ENCODE measurements at regions of chr1 and their contacts with region 1.

Region 1: DNA sequence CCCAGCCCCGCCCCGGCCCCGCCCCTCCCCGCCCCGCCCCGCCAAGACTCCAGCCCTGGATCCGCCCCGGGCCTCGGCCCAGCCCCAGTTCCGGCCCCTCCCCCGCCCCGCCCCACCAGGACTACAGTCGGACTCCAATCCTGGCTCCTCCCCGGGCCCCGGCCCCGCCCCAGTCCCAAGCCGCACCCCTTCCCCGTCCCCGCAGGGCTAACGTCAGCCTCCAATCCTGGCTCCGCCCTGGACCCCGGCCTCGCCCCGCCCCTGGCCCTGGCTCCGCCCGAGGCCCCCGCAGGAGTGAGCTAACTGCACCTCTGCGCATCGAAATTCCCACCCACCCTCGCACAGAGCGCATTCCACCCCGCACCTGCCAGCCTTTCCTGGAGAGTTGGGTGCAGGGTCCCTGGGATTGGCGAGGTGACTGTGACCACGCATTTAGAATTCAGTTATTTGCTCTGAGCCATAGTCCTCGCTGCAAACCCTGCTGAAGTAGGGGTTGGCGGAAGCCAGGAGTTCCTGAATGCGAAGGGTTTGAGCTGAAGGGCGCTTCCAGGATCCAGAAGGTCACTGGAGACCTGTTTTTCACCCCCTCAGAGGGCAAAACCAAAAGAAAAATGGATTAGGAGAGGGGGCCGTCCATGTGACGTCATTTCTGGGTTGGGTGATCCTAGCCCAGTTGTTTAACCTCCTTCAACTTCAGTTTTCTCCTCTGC is 588 bp upstream of the IGSF8 start:
- H3K4me3 ChIP-seq: peak overlapping the region; percentile 15
- H3K27ac ChIP-seq: no peak overlapping the region
- H3K4me1 ChIP-seq: peaks cover 4% of the 10 kb centered on the region
- CTCF ChIP-seq: no peak

Region 2: GRCh38 chr1:159829273-159829634 is 269.8 kb before region 1 on chr1:
- CTCF ChIA-PET with region 1: no interaction called
- POLR2A ChIA-PET with region 1: no interaction called
- H3K4me3 ChIP-seq: no peak overlapping the region
- H3K27ac ChIP-seq: no peak overlapping the region
- H3K4me1 ChIP-seq: no peaks in the 10 kb centered on the region
- CTCF ChIP-seq: peak; percentile 68

Region 3: DNA sequence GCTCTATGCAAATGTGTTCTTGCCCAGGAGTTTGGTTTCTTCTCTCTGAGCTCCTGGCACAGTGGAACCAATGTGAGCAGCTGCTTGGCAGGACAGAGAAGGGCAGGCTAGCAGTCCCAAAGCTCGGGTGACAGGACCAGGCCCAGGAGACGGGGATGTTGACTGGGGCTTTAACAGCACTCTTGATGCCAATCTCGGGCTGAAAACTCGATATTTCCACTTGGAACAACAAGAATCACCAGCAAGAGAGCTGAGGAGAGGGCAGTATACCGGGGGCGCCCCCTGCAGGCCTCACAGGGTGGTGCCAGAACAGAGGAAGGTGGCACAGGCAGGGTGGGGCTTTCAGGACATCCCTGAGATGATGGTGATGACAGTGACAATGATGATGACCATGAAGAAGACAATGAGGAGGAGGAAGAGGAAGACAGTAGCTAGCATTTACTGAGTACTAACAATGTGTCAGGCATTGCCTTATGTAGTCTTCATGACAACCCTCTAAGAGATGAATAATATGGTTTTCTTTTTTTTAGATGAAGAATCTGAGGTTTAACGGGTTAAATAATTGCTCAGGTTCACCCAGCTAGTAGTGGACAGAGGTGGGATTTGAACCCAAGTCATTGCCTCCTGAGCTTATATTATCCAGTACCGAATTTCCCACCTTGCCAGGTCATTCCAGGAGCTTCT is 20.4 kb before region 1 on chr1:
- CTCF ChIA-PET with region 1: interaction called, 19 read pairs
- POLR2A ChIA-PET with region 1: interaction called, 4 read pairs
- H3K4me3 ChIP-seq: no peak overlapping the region
- H3K27ac ChIP-seq: no peak overlapping the region
- H3K4me1 ChIP-seq: no peaks in the 10 kb centered on the region
- CTCF ChIP-seq: peak; percentile 76

Region 4: DNA sequence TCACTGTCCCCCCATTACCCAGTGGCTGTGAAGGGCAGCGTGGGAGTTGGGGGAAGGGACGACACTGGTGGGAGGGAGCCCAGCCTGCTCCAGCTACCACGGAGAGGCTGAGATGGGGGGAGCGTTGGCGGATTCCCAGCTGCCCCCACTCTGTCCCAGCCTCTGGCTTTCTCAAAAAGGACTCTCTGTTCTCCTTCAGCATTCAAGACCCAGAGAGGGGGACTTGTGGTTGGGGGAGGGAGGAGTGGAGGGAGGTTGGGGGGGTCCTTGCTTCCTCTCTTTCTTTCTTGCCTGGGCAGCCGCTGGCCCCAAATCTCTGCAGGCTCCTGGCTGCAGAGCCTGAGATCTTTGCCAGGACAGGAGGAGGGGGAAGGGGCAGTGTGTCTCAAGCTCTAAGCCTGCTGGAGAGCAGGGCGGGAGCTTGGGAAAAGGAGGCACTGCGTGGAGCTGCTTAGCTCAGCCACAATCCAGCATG is 18.7 kb after region 1 on chr1:
- CTCF ChIA-PET with region 1: interaction called, 14 read pairs
- POLR2A ChIA-PET with region 1: no interaction called
- H3K4me3 ChIP-seq: no peak overlapping the region
- H3K27ac ChIP-seq: no peak overlapping the region
- H3K4me1 ChIP-seq: no peaks in the 10 kb centered on the region
- CTCF ChIP-seq: no peak

Region 5: DNA sequence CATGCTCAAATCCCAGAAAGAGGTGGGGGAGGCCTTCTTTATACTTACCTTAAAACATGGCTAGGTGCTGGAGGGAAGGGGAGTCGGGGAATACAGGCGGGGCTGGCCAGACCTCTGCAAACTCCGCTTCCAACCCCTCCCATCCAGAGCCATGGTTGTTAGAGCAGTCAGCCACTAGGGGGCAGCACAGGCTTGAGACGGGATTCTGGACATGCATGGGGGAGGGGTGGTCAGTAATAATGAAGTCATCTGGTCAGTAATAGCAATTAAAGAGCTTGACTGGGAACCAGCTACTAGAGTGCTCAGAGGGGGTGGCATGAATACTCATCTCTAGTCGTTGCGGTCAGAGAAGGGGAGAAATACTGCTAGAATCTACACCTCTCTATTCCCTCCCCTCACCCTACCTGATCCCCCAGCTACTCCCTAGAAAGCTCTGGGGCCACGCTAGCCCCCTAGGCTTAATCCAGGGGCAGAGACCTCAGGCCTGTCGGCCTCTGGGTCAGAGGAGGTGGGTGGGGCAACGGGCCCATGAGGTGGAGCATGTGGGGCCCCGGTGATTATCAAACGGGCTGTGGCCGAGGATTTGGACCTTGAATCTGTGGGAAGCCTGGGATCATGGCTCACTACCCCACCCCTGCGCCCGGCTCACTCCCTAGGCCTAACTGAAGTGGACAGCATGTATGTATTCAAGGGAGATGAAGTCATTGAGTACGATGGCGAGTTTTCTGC is 94.2 kb after region 1 on chr1:
- CTCF ChIA-PET with region 1: interaction called, 20 read pairs
- POLR2A ChIA-PET with region 1: no interaction called
- H3K4me3 ChIP-seq: no peak overlapping the region
- H3K27ac ChIP-seq: no peak overlapping the region
- H3K4me1 ChIP-seq: no peaks in the 10 kb centered on the region
- CTCF ChIP-seq: peak; percentile 90

Region 6: DNA sequence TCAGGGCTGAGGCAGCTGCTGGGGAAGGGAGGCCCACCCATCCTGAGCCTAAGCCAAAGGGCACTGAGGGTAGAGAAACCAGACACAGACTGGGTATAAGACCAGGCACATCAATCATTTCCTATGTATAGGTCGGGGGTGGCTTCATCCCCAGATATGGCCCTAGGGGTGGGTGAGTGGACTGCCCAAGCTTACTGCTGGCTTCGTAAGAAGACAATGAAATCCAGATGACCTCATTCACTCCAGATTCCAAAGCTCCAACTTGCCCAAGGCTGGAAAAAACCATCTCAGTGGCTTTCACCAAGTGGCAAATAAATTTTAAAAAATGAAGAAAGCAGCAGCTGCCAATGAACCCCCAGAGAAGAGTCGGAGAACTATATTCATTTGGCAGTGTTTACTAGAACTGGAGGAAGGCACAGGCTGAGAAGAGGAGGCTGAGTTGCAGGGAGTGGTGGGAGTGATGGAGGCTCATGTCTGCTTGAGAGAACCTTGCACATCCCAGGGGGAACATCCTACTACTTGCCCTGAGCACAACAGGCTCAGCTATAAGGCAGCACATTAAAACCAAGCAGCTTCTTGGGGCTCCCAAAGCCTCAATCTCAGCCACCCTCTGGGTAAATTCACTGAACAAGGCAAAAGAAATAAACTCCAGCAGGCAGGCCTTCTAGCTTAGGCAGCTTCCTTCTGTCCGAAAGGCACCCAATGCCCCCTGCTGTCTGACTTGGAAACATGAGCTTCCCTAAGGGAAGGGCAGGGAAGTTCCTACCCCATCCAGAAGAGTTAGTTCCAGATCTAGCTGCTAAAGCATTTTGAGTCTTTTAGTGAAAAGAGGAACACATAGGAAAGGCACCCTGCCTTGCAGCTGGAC is 120.3 kb after region 1 on chr1:
- CTCF ChIA-PET with region 1: interaction called, 94 read pairs
- POLR2A ChIA-PET with region 1: interaction called, 7 read pairs
- H3K4me3 ChIP-seq: no peak overlapping the region
- H3K27ac ChIP-seq: no peak overlapping the region; the same call in 1 of the 2 replicates
- H3K4me1 ChIP-seq: no peaks in the 10 kb centered on the region
- CTCF ChIP-seq: peak; percentile 69; the same call in 1 of the 2 replicates